Lower leg skin (tissue), 4 donors: ENCODE measurements at regions of chr9 and their contacts with region 1.

Region 1: GRCh38 chr9:84397151-84397728 is 56.7 kb upstream of the SLC28A3 start:
- DNase-seq: peak; percentile 67 to 92
- H3K4me3 ChIP-seq: no peak overlapping the region
- CTCF ChIP-seq: no peak
- POLR2A ChIP-seq: no peak

Region 2: DNA sequence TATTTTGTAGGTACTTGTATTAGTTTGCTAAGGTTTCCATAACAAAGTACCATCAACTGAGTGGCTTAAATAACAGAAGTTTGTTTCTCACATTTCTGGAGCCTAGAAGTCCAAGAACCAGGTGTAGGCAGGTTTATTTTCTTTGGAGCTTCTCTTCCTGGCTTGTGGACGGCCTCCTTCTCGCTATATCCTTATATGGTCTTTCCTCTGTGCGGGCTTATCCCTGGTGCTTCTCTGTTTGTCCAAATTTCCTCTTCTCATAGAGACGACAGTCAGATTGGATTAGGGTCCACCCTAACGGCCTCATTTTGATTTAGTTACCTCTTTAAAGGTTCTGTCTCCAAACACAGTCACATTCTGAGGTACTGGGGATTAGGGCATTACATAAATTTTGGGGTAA is 328.4 kb before region 1 on chr9:
- intact Hi-C with region 1: no loop called
- DNase-seq: no peak
- H3K4me3 ChIP-seq: no peak overlapping the region
- CTCF ChIP-seq: no peak
- POLR2A ChIP-seq: no peak

Region 3: DNA sequence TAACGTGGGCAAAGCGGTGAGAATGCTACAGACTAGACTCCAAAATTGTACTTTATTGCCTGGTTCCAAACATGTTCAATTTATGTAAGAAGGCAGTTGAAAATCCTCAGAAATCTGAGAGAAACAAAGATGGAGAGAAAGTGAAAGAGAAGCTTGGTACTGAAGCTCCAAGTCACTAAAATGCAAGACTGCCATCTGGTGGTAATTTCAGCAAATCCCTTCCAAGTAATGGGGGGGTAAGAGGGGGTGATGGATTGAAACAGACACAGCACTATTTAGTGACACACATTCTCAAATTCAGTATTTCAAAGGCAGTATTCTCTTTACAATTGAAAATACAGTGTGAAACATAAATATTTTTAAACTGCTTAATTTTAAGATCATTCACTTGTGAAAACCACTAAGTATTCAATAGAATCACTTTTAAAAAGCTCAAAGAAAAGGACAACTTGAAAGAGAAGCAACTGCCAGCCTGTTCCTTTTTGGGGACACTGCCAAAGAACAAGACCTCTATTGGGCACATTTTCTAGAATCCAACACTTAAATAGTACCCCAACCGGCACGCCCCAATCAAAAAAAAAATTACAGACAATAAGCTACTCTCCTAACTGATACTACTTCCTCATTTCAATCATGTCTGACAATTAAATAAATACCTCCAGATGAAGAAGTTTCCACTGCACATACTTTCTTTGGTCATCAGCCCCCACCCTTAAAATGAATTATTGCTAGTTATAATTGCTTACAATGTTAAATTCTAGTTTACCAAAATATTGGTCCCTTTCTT is 1213.0 kb after region 1 on chr9:
- intact Hi-C with region 1: loop called (anchors 10 kb)
- DNase-seq: peak in 1 of 2 donors; percentile 33
- H3K4me3 ChIP-seq: no peak overlapping the region
- CTCF ChIP-seq: no peak
- POLR2A ChIP-seq: no peak